Activated CD8-positive, alpha-beta T cell treated with anti-CD3 and anti-CD28 coated beads, Interleukin-2, amount 10 ng/mL, durations not matched to agents 7 days and 5 days (primary cell): ENCODE measurements at regions of chr11 and their contacts with region 1.

Region 1: GRCh38 chr11:66317723-66318599 is 1.1 kb upstream of the CD248 start:
- DNase-seq: peak; percentile 95
- ATAC-seq: peak; percentile 66
- H3K4me3 Mint-ChIP-seq: peak overlapping the region; percentile 87
- H3K27ac Mint-ChIP-seq: peak overlapping the region; percentile 99
- H3K4me1 Mint-ChIP-seq: peaks cover 73% of the 10 kb centered on the region
- H3K27me3 Mint-ChIP-seq: no peaks in the 10 kb centered on the region

Region 2: DNA sequence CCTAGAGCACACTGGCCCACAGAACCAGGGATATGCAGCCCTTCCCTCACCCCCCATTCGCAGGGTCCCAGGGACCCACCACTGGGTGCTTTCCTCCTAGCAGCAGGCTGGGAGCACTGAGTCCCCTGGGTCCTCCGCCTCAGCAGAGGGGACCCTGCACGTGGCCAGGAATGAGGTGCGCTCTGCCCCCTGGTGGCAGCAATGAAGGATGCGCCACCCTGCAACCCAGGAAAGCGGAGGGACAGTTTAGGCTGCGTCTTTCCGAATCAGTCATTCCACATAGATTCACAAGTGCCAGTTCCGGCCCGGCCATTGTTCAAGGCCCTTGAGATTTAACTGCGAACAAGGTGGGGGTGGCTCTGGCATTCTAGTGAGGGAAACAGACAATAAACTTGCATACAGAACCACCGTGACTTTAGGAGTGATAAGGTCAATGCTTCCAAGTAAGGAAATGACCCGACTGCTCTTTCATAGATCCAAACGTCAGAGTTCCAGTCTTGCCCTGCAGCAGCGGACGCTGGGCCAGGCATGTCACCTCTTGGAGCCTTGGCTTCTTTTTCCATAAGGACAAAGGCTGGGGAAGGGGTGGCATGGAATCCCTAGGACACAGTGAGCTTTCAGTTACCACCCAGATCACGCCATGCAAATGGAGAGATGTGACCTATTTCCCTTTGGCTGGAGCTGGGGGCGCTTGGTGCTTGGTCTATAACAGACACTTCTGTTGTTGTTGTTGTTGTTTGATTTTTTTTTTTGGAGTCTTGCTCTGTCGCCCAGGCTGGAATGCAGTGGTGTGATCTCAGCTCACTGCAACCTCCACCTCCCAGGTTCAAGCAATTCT is 10.6 kb after region 1 on chr11:
- CTCF ChIA-PET with region 1: interaction called, 194 read pairs
- POLR2A ChIA-PET with region 1: interaction called, 45 read pairs
- DNase-seq: peak; percentile 85
- ATAC-seq: peak; percentile 78
- H3K4me3 Mint-ChIP-seq: peak overlapping the region; percentile 4
- H3K27ac Mint-ChIP-seq: peak overlapping the region; percentile 85
- H3K4me1 Mint-ChIP-seq: peaks cover 55% of the 10 kb centered on the region
- H3K27me3 Mint-ChIP-seq: no peaks in the 10 kb centered on the region

Region 3: DNA sequence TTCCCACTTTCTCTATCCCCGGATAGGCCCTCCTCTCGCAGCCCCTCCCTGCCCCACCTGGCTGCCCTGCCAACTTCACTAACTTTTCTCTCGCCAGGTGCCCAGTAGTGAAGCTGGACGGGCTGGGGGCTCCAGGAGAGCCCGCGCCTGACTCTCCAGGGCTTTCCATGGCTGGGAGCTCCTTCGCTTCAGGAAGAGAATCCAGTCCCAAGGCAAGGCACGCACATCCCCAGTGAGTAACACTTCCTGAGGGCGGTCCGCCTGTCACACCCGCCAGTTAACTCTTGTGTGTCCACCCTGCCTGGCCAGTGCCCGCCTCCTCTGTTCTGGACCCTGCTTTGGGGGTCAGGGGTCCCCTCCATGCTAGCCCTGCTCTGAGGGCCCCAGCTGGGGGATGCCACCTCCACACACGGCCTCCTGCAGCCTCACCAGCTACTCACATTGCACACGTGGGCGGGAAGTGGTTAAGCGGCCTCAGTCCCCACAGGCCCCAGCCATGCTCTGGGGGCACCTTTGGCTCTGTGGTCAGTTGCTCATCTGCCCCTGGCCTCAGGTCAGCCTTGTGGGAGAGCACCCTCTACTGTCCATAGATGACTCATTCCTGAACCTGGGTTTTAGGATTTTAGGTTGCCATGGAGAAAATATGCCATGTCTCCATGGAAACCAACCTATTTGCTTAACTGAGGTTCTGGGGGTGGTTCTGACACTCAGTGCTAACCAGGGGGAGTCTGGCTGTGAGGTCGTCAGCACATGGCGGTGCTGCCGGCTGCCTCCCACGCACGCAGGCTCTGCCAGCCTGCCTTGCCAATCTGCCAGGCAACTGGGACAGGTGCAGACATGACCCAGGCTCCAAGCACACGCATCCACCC is 18.5 kb after region 1 on chr11 and contains the start of gene RIN1:
- CTCF ChIA-PET with region 1: interaction called, 194 read pairs
- POLR2A ChIA-PET with region 1: interaction called, 25 read pairs
- DNase-seq: peak; percentile 82
- ATAC-seq: peak; percentile 80
- H3K4me3 Mint-ChIP-seq: peak within 1 kb of the TSS; percentile 50
- H3K27ac Mint-ChIP-seq: peak within 1 kb of the TSS; percentile 80
- H3K4me1 Mint-ChIP-seq: peaks cover 40% of the 10 kb centered on the region
- H3K27me3 Mint-ChIP-seq: no peaks in the 10 kb centered on the region
- total RNA-seq, gene RIN1: 1.3 TPM

Region 4: GRCh38 chr11:66491315-66491935 is 173.5 kb after region 1 on chr11:
- CTCF ChIA-PET with region 1: no interaction called
- POLR2A ChIA-PET with region 1: no interaction called
- DNase-seq: no peak
- ATAC-seq: no peak
- H3K4me3 Mint-ChIP-seq: no peak overlapping the region
- H3K27ac Mint-ChIP-seq: no peak overlapping the region
- H3K4me1 Mint-ChIP-seq: no peaks in the 10 kb centered on the region
- H3K27me3 Mint-ChIP-seq: no peaks in the 10 kb centered on the region